ENCODE measurements at regions of chr18 and their contacts with region 1.

Region 1: GRCh38 chr18:35580701-35581539 is 620 bp upstream of the GALNT1 start:
- DNase-seq: peak; percentile 74
- ATAC-seq: peak; percentile 83

Region 2: GRCh38 chr18:35407871-35408481 is 172.9 kb before region 1 on chr18:
- intact Hi-C with region 1: loop called (anchors 5 kb)
- DNase-seq: no peak
- ATAC-seq: peak; percentile 82

Region 3: DNA sequence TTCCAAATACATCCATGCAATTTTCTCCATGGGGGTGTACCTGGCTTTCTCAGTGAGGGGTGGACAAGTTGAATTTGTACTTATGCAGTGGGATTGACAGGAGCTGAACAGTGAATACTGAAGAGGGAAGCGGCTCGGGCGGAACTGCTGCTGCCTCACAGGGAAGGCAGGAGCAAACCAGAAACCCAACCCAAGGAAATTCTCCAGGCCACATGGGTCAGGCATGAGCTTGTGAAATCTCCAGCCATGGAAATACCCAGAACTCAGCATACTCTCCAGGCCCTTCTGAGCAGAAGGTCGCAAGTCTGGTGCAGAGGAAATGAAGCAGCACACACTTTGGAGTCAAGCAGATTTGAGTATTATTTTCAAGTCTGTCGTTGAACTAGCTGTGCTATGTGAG is 56.7 kb before region 1 on chr18:
- intact Hi-C with region 1: loop called (anchors 5 kb)
- DNase-seq: no peak
- ATAC-seq: peak; percentile 23

Region 4: GRCh38 chr18:35619464-35619863 is 38.5 kb after region 1 on chr18:
- intact Hi-C with region 1: loop called (anchors 2 kb)
- DNase-seq: no peak
- ATAC-seq: peak; percentile 91

Region 5: GRCh38 chr18:35695803-35696202 is 114.9 kb after region 1 on chr18:
- intact Hi-C with region 1: loop called (anchors 2 kb)
- DNase-seq: peak; percentile 81
- ATAC-seq: peak; percentile 94

Measured in Right ventricle myocardium inferior (tissue), 1 donor.